GM10248 (cell line): ENCODE measurements at regions of chr11 and their contacts with region 1.

Region 1: DNA sequence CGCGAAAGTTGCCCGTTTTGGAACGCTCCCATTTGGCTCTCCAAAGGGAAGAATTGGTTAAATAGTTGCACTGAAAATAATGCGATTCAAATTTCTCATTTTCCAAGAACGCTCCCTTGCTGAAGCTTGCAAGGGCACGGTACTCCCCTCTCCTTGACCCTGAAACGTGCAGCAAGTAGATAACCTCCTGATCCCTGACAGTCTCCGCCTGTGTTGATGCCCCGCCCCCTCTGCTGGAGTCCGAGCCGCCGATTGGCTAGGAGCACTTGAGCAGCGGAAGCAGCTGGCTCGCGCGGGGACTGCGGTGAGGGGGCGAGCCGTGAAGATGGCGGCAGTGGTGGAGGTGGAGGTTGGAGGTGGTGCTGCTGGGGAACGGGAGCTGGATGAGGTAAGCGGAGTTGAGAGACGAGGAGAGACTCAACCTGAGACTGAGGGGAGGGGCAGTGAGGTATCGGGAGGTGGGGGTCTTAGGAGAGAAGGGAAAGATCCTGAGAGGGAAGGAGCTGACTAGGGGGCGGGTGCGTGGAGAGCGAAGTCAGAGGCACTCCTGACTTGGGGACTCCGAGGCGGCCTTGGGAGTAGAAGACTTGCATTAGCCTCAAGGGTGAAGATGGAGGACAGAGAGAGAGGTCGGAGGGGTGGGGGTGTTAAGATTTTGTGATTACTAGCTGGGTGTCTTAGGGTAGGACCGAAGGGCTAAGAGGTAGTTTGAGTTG is at the start of gene RNF121:
- DNase-seq: peak; percentile 95
- CTCF ChIP-seq: no peak

Region 2: GRCh38 chr11:71136095-71136845 is 792.6 kb before region 1 on chr11:
- CTCF ChIA-PET with region 1: no interaction called
- POLR2A ChIA-PET with region 1: interaction called, 10 read pairs
- DNase-seq: no peak
- CTCF ChIP-seq: no peak

Region 3: GRCh38 chr11:71914617-71915189 is 14.2 kb before region 1 on chr11:
- CTCF ChIA-PET with region 1: interaction called, 12 read pairs
- POLR2A ChIA-PET with region 1: no interaction called
- DNase-seq: no peak
- CTCF ChIP-seq: no peak

Region 4: GRCh38 chr11:71940561-71941219 is 11.8 kb after region 1 on chr11:
- CTCF ChIA-PET with region 1: interaction called, 28 read pairs
- POLR2A ChIA-PET with region 1: no interaction called
- DNase-seq: no peak
- CTCF ChIP-seq: no peak

Region 5: DNA sequence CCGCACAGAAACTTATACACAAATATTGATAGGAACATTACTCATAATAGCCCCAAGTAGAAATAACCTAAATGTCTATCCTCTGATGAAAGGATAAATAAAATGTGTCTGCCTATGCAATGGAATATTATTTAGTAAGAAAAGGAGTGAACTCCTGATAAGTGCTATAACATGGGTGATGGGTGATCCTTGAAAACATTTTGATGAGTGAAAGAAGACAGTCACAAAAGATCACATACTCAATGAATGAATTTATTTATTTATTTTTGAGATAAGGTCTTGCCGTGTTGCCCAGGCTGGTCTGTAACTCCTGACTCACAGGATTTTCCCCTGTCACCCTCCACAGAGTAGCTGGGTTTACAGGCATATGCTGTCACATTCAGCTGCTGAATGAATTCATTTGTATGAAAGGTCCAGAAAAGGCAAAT is 17.3 kb after region 1 on chr11:
- CTCF ChIA-PET with region 1: interaction called, 28 read pairs
- POLR2A ChIA-PET with region 1: interaction called, 3 read pairs
- DNase-seq: no peak
- CTCF ChIP-seq: no peak

Region 6: DNA sequence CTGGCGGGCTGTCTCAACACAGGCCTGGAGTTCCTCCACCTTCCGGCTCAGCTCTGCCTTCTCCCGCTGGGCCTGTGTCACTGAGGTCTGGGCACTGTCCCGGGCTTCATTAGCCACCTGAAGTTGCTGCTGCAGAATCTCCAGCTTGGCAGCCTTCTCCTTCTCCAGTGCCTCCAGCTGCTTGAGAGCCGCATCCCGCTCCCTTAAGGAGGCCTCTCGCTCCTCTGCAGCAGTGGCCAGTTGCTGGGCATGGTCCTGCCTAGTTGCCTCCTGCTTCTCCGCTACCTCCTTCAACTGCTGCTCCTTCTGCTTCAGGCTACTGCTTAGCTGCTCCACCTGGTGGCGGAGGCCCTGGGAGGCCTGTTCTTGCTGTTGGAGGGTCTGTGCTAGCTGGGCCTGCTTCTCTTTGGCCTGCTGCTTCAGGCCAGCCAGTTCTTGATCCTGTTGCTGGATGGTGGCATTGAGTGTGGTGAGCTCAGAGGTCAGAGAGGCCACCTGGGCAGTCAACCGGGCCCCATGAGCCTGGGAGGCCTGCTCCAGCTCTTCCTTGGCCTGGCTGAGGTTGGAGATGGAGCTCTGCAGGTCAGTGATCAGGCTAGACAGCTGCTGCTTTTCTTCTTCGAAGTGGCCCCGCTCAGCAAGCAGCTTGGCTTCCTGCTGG is 86.7 kb after region 1 on chr11:
- CTCF ChIA-PET with region 1: no interaction called
- POLR2A ChIA-PET with region 1: no interaction called
- DNase-seq: no peak
- CTCF ChIP-seq: peak; percentile 71